Right ventricle myocardium inferior (tissue), 1 donor: ENCODE measurements at regions of chr18 and their contacts with region 1.

Region 1: GRCh38 chr18:37537868-37538525 is 27.6 kb downstream of the CELF4 start:
- DNase-seq: peak; percentile 84
- ATAC-seq: peak; percentile 82

Region 2: DNA sequence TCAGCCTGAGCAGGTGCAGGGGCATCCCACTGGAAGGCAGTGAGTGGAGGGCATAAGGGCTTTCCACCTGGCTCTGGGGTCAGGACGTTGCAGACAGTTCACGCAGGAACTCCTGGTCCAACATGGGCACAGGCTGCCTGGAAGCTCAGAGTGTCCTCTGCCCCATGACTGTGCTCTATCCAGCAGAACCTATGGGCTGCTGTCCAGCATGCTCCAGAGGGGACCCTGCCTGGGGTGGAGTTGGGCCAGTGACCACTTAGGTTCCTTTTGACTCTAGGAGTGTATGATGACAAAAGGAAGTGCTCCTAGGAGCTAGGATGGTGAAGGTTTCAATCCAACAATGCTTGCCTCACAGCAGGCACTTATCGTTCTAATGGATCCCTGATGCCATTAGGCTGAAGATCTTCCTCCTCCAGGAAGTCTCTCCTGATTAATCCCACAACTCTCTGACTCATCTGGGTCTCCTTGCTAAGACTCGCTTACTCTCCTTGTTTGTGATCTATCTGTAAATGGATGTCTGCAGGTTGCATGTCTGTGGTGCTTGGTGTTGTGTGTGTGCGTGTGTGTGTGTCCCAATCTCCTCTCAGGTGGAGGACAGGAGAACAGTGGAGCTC is 196.4 kb before region 1 on chr18:
- intact Hi-C with region 1: loop called (anchors 2 kb)
- DNase-seq: no peak
- ATAC-seq: no peak

Region 3: GRCh38 chr18:37385846-37386778 is 151.9 kb before region 1 on chr18:
- intact Hi-C with region 1: loop called (anchors 2 kb)
- DNase-seq: no peak
- ATAC-seq: no peak

Region 4: GRCh38 chr18:37450434-37451132 is 87.4 kb before region 1 on chr18:
- intact Hi-C with region 1: no loop called
- DNase-seq: no peak
- ATAC-seq: no peak

Region 5: DNA sequence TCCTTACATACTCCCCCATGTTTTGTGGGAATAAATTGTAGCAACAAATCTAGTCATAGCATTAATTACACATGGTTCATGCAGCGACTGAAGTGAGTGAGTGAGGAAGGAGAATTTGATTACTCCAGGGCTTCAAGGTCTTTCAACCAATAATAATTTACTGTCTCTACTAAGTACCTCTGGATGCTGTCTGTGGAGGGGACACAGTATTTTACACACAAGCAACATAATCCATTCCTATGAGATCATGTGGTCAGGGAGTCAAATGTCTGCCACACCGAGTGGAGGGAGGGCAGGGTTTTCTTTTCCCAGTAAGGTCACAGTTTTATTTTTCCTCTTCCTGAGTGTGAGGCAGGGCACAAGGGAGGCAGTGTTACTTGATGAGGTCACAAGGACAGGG is 362.3 kb after region 1 on chr18:
- intact Hi-C with region 1: no loop called
- DNase-seq: no peak
- ATAC-seq: no peak